ACHN (cell line): ENCODE measurements at regions of chr2 and their contacts with region 1.

Region 1: GRCh38 chr2:31170071-31170698 is 31.9 kb upstream of the GALNT14 start:
- DNase-seq: peak; percentile 68

Region 2: DNA sequence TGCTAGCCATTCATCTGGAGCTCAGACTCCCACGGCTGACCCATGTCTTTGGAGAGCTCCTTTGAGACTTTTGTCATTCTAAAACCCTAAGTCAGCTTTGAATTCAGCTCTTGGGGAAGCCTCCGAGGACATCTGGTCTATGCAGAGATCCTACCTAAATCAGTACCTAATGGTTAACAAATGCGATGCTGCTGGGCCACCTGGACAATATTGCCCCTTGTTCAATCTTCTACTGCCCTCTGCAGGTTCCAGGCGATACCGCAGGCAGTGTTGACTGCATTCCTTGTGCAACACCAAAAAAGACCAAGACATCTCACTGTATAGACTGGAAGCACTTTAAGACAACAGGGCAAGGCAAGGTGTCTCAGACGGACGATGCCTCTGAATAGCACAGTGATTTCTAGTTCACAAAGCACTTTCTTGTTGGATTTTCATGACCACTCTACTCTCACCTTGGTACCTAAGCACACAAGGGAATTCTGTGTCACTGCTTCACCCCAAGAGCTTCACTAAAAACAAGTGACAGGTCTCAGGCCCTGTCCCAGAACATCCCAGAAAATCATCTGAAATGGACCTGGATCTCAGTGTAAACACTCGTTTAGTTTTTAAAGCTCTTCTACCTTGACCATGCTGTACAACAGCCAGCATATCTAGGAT is 163.5 kb after region 1 on chr2:
- in situ Hi-C with region 1: loop called (anchors 25 kb)
- DNase-seq: peak; percentile 80

Region 3: DNA sequence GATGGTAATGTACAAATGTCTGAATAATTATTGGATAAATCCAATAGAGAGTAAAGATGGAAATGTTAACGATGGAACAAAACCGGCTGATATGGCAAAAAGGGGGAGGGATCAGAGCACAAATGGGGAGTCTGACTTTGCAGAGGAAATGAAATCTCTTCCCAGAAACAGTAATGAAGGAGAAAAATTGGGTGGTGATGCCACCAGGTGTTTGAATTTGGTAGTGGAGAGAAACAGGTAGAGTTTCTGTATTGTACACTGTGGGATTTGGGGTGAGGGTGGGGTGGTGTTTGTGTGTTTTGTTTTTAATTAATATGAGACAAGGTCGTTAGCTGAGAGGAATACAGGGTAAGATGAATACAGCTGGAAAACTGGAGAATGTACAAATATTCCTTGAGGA is 264.7 kb after region 1 on chr2:
- in situ Hi-C with region 1: no loop called
- DNase-seq: no peak